A549 (cell line): ENCODE measurements at regions of chr10 and their contacts with region 1.

Region 1: DNA sequence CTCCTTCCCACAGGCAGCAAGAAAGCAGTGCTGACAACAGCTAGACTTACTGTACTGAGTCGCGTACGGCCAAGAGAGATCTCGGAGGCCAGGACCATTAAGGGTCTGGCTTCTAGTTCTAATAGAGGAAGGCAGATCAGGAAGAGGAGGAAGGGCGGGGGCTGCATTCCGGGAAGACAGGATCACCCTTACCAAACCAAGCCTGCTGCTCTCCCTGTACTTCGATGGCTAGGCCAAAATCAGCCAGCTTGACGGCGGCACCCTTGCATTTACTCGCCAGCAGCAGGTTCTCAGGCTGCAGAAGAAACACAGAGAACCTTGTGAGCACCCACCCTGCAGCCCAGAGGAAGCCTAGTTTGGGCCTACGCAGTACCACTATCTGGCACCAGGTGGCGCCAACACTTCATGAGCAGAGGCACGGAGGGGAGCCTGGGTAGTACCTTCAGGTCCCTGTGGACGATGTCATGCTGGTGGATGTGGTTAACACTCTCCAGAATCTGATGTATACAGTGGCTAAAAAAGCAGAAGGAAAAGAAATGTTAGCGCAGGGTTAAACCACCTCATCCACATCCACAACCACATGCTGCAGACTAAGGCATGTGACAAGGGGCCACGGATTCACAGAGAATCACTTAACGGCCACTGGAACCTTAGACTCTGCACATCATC is 25.4 kb downstream of the CAMK2G start:
- DNase-seq: peak; percentile 78 to 94
- ATAC-seq: peak; percentile 92 to 97
- H3K4me3 ChIP-seq: no peak overlapping the region
- H3K27ac ChIP-seq: no peak overlapping the region
- H3K4me1 ChIP-seq: peaks cover 7% of the 10 kb centered on the region; the same call in 1 of the 3 replicates
- CTCF ChIP-seq: peak; percentile 94
- EP300 ChIP-seq: no peak
- POLR2A ChIP-seq: no peak
- RAD21 ChIP-seq: peak; percentile 93 to 97

Region 2: DNA sequence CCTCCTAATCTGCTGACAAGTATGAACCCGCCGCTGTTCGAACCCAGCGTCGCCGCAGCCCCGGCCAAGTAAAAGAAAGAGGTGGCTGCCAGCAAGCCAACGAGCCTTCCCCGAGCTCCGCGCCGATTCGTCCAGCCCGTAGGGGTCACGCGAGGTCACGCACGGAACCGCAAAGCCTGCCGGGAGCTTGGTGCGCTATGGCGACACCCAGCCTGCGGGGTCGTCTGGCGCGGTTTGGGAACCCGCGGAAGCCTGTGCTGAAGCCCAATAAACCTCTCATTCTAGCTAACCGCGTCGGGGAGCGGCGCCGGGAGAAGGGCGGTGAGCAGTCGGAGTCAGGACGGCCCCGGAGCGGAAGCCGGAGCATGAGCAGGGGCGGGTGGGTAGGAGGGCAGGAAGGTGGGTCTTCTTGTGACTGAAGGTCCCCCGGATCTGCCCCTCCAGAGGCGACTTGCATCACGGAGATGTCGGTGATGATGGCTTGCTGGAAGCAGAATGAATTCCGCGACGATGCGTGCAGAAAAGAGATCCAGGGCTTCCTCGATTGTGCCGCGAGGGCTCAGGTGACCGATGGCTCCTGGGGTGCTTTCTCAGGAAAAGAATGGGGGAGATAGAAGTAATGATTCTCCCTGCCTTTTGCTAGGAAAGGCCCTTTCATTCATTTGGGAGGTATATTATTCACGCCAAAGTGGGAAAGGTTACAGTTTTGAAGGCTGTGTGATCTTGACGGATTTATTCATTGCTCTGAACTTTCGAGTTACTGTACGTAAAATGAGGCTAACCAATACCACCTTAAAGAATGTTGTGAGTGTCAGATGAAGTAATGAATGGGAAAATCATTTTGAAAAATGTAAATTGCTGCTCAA is 66.8 kb before region 1 on chr10 and contains the start of gene CHCHD1:
- CTCF ChIA-PET with region 1: no interaction called
- POLR2A ChIA-PET with region 1: no interaction called
- DNase-seq: peak; percentile 85 to 94
- ATAC-seq: peak; percentile 70 to 82
- H3K4me3 ChIP-seq: peak within 1 kb of the TSS; percentile 88
- H3K27ac ChIP-seq: peak within 1 kb of the TSS; percentile 95 to 98
- H3K4me1 ChIP-seq: peaks cover 32% of the 10 kb centered on the region
- CTCF ChIP-seq: no peak
- EP300 ChIP-seq: no peak
- POLR2A ChIP-seq: peak; percentile 83
- RAD21 ChIP-seq: no peak
- polyA plus RNA-seq, gene CHCHD1: 67.2 and 75.4 TPM in 2 replicates

Region 3: DNA sequence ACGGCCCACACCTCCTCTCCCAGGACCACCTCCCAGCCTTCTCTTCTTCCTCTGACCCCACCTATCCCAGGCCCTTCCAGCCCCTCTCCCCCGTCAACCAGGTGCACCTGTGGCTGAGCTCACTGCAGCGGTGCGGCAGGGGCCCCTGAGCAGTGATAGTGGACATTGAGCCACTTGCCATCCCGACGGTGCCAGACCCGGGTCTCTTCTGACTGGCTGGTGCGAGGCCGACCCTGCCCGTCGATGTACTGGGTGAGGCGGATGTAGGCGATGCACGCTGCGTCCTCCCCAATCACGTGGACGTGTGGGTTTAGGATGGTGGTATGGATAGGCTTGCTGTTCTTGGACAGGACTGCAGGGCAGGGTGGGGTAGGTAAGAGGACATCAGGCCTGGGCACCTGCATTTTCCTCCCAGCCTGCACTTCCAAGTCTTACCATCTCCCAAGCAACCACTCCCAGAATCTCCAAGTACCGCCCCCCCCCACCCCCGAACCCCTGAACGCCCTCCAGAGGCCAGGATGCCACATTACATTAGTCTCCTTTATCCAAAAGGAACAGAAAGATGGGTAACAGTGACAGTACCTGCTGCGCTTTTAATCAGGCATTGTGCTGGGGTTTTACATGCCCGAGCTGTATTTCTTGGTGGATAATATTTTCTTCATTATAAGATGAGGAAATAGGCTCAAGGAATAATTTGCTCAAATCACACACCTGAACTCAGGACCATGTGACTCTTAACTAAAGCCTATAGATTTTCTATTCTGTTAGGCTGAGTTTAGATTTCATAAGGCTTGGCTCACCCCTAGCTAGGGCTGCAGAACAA is 33.8 kb before region 1 on chr10:
- CTCF ChIA-PET with region 1: interaction called, 12 read pairs
- POLR2A ChIA-PET with region 1: interaction called, 4 read pairs
- DNase-seq: peak; percentile 62 to 79
- ATAC-seq: no peak; a peak in 1 of 6 replicates
- H3K4me3 ChIP-seq: no peak overlapping the region
- H3K27ac ChIP-seq: no peak overlapping the region
- H3K4me1 ChIP-seq: peaks cover 5% of the 10 kb centered on the region; the same call in 2 of the 3 replicates
- CTCF ChIP-seq: peak; percentile 23; the same call in 1 of the 3 replicates
- EP300 ChIP-seq: no peak
- POLR2A ChIP-seq: no peak
- RAD21 ChIP-seq: no peak

Region 4: DNA sequence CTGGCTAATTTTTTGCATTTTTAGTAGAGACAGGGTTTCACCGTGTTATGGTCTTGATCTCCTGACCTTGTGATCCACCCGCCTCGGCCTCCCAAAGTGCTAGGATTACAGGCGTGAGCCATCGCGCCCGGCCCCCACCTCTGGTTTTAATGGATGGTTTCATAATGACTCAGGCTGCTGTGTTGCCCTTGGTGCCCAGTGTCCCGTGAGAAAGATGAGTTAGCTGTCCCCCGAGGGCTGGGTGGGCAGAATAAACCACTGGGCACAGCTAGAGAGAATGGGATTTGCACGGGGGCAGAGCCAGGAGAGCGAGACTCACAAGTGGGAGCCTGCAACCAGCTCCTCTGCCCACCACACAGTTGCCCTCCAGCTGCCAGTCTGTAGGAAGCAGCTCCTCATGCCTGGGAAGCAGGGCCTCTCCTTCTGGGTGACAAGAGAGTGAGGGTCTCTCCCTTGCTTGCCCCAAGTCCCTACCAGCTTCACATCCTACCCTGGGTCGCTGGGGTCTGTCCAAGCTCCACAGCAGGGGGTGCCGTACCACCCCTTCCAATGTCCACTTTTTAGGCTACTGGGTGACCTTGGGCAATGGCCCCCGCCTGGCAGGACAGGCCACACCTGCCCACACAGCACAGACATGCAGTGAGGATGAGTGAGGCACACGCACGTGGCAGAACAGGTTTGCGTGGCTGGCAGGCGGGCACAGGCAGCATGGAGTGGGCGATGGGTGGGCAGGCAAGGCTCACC is 21.4 kb before region 1 on chr10:
- CTCF ChIA-PET with region 1: interaction called, 17 read pairs
- POLR2A ChIA-PET with region 1: no interaction called
- DNase-seq: no peak
- ATAC-seq: no peak; a peak in 1 of 6 replicates
- H3K4me3 ChIP-seq: no peak overlapping the region
- H3K27ac ChIP-seq: no peak overlapping the region
- H3K4me1 ChIP-seq: 0 out of 3 replicates have a peak, but pooled peaks cover 3% of the 10 kb centered on the region
- CTCF ChIP-seq: no peak
- EP300 ChIP-seq: no peak
- POLR2A ChIP-seq: no peak
- RAD21 ChIP-seq: no peak

Region 5: GRCh38 chr10:73837072-73837471 is 11.9 kb before region 1 on chr10:
- CTCF ChIA-PET with region 1: interaction called, 93 read pairs
- POLR2A ChIA-PET with region 1: no interaction called
- DNase-seq: no peak
- ATAC-seq: no peak
- H3K4me3 ChIP-seq: no peak overlapping the region
- H3K27ac ChIP-seq: no peak overlapping the region
- H3K4me1 ChIP-seq: peaks cover 9% of the 10 kb centered on the region; the same call in 2 of the 3 replicates
- CTCF ChIP-seq: no peak
- EP300 ChIP-seq: no peak
- POLR2A ChIP-seq: no peak
- RAD21 ChIP-seq: no peak

Region 6: DNA sequence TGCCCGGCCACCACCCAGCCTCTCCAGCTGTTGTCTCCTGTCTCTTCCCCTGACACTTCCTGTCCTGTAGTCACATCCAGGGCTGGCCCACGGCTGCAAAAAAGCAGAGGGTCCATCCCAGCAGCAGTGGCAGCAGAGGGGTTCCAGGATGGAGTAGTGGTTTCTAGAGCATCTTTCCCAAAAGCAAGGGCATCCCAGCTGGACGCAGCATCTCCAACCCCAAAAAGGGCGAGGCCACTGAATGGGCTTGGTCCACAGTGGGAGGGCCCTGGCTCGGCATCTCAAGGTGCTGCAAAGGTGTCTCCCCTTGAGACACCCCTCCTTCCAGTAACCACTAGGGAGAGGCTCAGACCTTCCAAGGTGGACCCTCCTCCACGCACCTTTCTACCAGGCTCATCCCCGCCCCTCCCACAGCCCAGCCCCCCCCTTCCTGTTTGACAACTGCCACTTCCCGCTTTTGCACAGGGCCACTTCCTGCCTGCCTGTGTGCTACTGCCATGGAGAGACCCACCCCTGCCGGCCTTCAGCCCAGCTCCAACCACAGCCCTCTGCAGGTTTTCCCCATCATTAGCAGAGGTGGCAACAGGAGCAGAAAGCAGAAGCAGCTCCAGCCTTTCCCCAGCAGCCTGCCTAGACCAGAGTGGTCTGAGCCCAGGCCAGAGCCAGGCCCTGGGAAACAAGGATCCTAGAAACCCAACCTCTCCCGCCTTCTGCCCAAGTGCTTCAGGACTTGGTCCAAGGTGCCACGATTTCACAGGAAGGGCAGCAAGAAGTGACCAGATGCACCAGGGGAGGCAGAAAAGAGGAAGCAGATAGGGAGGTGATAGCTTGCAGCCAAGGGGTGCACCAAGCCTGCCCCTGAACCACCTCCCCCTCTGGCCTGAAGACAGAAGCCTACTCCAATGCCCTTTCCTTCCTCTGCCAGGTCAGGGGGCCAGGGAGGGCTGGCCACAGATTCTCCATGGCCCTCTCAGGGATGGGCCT is 16.8 kb after region 1 on chr10:
- CTCF ChIA-PET with region 1: interaction called, 191 read pairs
- POLR2A ChIA-PET with region 1: no interaction called
- DNase-seq: no peak
- ATAC-seq: no peak
- H3K4me3 ChIP-seq: no peak overlapping the region
- H3K27ac ChIP-seq: no peak overlapping the region
- H3K4me1 ChIP-seq: no peaks in the 10 kb centered on the region
- CTCF ChIP-seq: no peak
- EP300 ChIP-seq: no peak
- POLR2A ChIP-seq: no peak
- RAD21 ChIP-seq: no peak

Region 7: DNA sequence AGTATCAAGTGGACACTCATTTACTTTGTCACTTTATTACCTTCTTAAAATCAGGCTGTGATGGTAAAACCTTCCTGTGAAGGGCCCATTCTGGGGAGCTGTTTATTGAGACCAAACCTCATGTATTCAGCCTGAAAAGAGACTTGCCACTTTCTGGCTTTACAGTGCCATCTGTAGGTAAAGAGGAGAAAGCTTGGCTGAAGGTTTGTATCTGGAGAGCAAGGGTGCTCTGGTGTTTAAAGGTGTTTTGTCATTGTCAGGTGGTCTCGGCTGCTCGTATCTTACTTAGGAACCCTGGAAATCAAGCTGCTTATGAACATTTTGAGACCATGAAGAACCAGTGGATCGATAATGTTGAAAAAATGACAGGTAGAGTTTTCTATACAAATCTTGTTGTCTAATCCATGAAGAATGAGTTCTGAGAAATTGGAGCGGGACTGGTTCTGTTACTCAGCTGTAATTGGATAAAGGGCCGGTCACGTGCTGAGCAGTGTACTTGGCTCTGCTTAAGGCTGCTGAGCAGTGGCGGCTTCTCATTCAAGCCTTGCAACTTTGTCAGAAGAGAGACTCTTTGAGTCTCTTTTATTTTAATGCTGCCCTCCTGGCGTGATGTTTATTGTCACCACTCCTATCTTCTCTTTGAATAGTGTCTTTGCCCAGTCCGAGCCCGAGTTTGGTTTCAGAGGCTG is 254.7 kb after region 1 on chr10:
- CTCF ChIA-PET with region 1: interaction called, 10 read pairs
- POLR2A ChIA-PET with region 1: no interaction called
- DNase-seq: peak; percentile 48 to 51
- ATAC-seq: peak in 1 of 2 experiments; percentile 76; a peak in 3 of 6 replicates
- H3K4me3 ChIP-seq: no peak overlapping the region
- H3K27ac ChIP-seq: no peak overlapping the region
- H3K4me1 ChIP-seq: no peaks in the 10 kb centered on the region
- CTCF ChIP-seq: peak; percentile 58
- EP300 ChIP-seq: no peak
- POLR2A ChIP-seq: no peak
- RAD21 ChIP-seq: peak; percentile 59